Right ventricle myocardium inferior (tissue), 1 donor: ENCODE measurements at regions of chr7 and their contacts with region 1.

Region 1: DNA sequence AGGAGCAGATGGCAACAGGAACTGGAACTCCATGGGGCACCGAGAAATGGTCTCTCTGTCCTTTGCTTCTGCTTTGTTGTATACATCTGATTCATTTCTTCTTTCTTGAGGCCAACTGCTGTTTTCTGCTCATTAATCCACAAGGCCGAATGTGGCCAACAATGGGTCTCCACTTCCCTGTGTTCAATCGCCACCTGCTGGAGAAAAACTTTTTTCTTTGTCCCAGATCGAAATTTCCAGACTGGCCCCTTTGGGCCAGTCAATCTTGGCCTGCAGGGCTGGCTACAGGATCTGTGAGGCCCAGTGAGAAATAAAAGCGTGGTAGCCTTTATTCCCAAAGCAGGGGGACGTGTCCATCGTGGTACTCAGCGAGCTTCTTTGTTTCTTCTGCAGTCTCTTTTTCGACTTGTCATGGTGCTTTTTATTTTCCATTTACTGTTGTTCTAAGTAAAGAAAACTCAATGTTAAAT is 58.8 kb downstream of the PARP12 start:
- DNase-seq: no peak
- ATAC-seq: no peak

Region 2: DNA sequence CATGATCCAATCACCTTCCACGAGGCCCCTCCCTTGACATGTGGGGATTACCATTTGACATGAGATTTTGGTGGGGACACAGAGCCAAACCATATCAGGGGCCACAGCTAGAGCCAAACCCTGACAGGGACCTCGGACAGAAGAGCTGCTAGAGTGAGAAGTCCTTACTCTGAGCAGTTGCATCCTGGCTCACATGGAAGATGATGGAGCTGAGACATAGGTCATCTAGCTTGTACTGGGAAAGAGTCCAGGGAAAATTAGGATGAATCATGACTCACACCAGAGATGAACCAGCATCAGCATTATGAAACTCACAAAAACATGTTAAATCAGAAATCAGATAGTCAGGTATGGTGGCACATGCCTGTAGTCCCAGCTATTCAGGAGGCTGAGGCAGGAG is 675.6 kb before region 1 on chr7:
- intact Hi-C with region 1: no loop called
- DNase-seq: no peak
- ATAC-seq: no peak

Region 3: GRCh38 chr7:139500770-139501138 is 503.2 kb before region 1 on chr7:
- intact Hi-C with region 1: loop called (anchors 2 kb)
- DNase-seq: no peak
- ATAC-seq: no peak

Region 4: GRCh38 chr7:139548302-139549028 is 455.5 kb before region 1 on chr7:
- intact Hi-C with region 1: no loop called
- DNase-seq: no peak
- ATAC-seq: no peak

Region 5: GRCh38 chr7:139602143-139602722 is 401.7 kb before region 1 on chr7:
- intact Hi-C with region 1: loop called (anchors 5 kb)
- DNase-seq: no peak
- ATAC-seq: peak; percentile 41

Region 6: DNA sequence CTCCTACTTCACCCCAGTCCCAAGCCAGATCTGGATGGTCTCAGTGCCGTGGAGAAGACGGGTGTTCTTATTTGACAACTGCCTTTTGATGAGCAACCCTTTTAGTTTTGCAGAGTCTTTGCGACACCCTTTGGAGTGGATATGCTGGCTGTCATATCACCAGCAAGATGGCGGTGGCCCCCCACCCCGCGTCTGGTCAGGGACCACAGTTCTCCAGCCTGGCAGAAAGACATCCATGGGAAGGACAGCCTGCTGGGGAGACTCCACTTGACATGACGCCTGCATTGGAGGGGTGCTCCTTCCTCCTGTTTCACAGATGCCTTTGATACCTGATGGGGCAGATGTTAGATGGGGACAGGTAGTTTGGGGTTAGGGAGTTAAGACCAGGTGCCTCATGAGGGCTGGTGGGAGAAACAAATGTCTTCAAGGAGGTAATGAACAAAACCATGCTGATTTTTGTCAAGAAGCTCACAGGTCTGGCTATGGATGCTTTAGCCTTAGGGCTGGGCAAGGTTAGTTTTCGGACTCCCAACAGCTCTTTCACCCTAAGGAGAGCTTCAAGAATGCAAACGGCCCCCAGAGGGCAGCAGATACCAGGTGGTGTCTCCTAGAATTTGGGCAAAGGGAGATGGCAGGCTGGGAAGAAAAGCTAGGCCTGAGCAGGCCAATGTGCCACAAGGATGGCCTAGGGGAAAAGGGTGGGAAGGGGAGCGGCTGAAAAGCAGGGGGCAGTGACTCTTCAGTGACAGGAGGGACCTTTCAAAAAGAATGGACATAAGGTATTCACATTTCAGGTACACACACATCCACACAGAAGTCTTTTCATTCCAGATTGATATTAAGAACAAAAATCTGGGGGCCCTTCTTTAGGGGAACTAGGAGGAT is 385.2 kb before region 1 on chr7:
- intact Hi-C with region 1: loop called (anchors 5 kb)
- DNase-seq: no peak
- ATAC-seq: peak; percentile 42

Region 7: DNA sequence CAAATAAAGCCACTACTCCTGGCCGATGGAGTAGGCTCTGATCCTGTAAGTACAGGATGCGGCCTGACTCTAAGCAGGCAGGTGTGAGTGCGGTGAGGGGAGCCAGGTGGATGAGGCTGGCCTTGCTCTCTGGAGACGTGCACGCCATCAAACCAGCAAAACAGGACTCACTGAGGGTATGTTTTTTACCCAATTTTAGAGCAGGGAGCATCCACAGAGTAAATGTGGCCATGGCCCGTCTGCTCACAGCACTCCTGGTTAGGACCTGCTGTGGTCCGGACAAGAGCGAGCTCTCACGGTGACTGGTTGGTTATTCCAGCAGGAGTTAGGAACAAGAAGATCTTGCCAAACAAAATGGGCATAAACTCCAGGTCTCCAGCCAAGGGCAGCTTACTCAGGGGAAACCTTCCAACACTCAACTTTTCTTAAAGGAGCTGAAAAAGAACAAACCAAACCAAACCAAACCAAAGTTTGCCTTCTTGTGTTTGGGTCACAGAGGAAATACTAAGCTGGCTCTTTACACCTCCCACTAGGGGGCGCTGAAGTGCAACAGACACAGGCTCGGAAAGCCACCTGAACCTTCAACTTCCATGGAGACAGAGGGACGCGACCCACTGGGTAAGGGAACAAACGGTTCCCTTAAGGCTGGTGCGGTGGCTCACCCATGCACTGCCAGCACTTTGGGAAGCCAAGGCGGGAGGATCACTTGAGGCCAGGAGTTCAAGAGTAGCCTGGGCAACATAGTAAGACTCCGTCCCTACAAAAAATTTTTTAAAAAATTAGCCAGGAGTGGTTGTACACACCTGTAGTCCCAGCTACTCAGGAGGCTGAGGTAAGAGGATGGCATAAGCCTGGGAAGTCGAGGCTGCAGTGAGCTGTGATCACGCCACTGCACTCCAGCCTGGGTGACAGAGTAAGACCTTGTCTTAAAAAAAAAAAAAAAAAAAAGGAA is 358.1 kb before region 1 on chr7:
- intact Hi-C with region 1: loop called (anchors 2 kb)
- DNase-seq: peak; percentile 79
- ATAC-seq: peak; percentile 61

Region 8: GRCh38 chr7:139777948-139778841 is 225.8 kb before region 1 on chr7 and contains the start of gene HIPK2:
- intact Hi-C with region 1: loop called (anchors 2 kb)
- DNase-seq: peak; percentile 91
- ATAC-seq: peak; percentile 85
- total RNA-seq, gene HIPK2: 97.8 TPM

Region 9: DNA sequence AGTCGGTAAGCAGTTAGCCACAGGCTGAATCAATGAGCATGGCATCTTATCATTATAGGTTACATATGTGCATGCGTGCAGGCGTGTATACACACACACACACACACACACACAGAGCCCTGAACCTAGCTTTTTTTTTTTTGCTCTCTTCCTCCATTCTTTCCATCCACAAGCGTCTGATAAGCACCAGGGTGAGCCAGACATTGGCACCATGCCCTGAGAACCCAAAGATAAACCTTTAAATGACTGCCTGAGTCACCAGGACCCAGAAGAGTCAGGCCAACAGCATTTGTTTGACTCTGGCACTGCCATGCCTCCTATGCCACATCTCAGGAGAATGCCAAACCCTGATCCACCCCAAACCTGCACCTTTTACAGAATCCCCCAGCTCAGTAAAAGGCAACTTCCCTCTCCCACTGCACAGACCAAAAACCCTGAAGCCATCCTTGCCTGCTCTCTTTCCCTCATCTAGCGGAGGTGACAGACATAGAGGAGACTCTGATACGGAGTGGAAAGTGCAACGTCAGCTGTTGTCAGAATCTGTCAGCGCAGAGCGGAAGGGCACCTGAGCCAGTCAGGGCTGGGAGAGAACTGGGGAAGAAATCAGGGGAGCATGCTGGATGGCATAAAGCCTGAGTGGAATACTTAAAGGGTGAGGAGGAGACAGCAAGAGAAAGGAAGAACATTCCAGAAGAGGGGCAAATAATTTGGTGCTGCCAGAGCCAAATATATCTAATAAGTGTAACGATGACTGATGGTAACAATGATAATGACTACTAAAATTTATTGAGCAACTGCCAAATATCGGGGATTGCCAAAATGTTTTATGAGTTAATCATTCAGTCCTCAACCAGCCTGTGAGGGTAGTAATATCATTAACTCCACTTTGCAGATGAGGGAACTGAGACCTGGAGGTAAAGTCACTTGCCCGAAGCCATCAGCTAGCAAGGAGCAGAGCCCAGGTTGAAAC is 55.6 kb after region 1 on chr7:
- intact Hi-C with region 1: no loop called
- DNase-seq: no peak
- ATAC-seq: peak; percentile 35